Right ventricle myocardium superior (tissue), 1 donor: ENCODE measurements at regions of chr20 and their contacts with region 1.

Region 1: GRCh38 chr20:3316136-3316535 is 77.1 kb upstream of the SLC4A11 start:
- DNase-seq: no peak
- ATAC-seq: peak; percentile 35

Region 2: DNA sequence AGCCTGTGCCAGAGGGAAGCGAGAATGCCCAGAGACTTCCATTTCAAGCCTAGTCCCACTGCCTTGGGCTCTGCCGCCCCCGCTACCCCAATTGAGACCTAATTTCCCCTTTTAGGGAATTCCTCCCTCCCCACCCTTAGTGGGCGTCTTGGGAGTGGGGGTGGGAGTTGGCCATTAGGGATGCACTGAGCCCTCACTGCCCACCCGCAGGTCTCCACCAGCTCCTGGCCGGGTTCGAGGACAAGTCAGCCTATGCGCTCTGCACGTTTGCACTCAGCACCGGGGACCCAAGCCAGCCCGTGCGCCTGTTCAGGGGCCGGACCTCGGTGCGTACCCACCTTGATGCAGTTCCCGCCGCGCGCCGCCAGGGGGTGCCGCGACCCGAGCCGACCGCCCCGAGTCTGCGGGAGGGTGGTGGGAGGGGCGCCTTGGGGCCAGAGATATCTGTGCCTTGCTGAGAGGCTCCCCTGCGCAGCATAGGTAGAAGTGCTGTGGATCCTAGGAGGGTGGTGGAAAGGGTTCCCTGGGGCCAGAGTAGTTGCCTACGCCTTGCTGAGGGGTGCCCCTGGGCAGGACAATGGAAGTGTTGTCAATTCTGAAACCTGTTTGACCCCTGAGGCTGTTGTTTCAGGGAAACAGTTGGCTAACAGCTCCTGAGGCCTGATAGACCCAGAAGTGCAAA is 97.7 kb before region 1 on chr20:
- intact Hi-C with region 1: loop called (anchors 5 kb)
- DNase-seq: peak; percentile 83
- ATAC-seq: peak; percentile 74